GM13976 (cell line): ENCODE measurements at regions of chr10 and their contacts with region 1.

Region 1: DNA sequence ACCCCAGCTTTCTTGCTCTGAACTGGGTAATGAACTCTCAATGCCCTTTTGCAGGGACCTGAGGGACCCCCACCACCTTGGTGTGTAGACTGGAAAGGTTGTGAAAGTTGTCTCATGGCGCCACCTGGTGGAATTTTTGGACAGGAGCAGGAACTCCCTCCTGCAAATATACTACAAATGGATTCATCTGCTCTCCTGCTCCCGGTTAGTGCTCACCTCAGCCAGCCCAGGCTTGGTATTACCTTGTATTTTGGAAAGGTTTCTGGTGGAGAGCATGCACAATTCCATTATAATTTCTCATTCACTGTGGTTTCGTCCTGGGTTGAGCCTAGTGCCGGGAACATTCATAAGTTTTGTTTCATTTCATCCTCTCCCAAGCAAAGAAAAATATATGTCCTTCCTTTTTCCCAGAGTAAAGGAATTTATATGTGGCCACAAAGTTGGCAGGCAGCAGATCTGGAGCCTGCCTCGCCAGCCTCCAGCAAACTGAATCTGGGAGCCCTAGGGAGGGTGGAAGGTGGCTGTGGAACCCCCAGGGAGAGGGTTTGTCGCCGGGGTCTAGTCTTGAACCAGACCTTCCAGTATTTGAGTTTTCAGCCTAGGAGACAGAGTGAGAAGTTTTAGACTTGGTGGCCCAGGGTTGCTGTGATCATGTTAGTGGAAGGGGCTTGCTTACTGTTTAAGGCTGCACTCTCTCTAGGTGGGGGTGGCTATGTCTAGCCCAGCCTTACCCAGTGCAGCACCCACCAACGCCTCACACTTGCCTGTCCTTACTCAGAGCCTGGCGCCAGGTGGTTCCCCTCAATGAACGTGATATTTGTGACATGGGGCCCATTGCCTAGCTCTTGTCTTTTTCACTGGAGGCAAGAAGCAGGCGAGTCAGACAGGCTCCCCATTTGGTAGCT is 9.5 kb downstream of the FAM241B start:
- DNase-seq: peak; percentile 83
- CTCF ChIP-seq: peak; percentile 58

Region 2: GRCh38 chr10:68611227-68611626 is 1028.3 kb before region 1 on chr10:
- in situ Hi-C with region 1: no loop called
- DNase-seq: no peak
- CTCF ChIP-seq: no peak

Region 3: GRCh38 chr10:69474742-69475432 is 164.7 kb before region 1 on chr10:
- in situ Hi-C with region 1: no loop called
- DNase-seq: no peak
- CTCF ChIP-seq: no peak

Region 4: DNA sequence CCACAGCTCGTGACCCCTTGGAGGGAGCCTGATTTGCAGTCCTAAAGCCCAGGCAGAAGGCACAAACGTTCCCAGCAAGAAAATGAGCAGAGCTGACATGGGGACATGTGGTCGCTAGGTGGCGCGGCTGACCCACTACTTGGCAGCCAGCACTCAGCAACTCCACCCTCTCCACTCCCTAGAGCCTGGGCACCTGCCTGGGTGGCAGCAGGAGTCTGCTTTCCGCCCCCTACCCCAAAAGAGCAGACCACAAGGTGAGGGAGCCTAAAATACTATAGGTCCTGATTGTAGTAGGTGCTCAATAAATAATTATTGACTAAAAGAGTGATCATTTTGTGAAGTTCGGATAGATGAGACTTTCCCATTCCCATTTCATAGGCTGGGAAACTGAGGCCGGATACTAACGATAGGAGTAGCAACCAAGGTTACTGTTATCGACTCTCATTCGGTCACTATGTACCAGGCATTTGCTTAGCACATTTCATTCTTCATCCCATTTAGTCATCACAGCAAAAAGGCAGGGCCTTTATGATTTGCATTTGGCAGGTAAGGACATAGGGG is 123.8 kb before region 1 on chr10:
- in situ Hi-C with region 1: loop called (anchors 5 kb)
- DNase-seq: peak; percentile 84
- CTCF ChIP-seq: peak; percentile 92

Region 5: DNA sequence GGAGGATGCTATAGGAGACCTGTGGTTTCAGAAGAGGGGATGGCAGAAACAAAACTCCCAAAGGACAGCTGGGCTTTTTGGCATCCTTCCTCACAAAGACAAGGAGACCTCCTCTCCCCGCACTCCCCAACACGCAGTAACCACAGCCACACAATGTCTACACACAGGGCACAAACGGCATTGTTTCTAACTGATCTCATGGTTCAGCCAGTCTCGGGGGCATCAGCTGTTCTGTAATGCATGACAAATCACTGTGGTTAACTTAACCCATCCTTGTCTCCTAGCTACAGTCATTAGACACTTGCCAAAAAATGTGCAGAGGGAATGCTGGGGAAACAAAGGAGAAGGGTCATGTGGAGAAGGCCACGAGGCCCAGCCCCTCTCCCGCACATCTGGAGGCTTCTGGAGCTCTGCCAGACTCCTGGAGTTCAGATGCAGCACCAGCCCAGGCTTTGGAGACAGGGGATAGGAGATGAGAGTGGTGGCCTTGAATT is 1025.2 kb after region 1 on chr10:
- in situ Hi-C with region 1: no loop called
- DNase-seq: no peak
- CTCF ChIP-seq: no peak